ENCODE measurements at regions of chr19 and their contacts with region 1.

Region 1: GRCh38 chr19:41641879-41642485 is 15.1 kb upstream of the CEACAM4 start:
- DNase-seq: peak; percentile 67 to 80 (median 69)
- H3K4me3 ChIP-seq: no peak overlapping the region
- H3K27ac ChIP-seq: no peak overlapping the region
- H3K4me1 ChIP-seq: peaks cover 6 to 26% (median 18%) of the 10 kb centered on the region in 4 experiments
- H3K27me3 ChIP-seq: no peaks in the 10 kb centered on the region

Region 2: DNA sequence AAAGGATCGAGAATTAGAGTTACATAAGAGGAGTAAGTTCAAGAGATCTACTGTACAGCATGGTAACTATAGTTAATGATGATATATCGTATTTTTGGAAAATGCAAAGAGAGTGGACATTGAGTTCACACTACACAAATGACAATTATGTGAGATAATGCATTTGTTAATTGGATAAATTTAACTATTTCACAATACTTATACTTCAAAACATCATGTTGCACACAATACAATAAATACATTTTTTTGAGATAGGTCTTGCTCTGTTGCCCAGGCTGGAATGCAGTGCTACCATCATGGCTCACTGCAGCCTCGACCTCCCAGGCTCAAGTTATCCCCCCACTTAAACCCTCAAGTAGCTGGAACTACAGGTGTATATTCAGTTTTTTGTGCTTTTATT is 535.8 kb before region 1 on chr19:
- CTCF ChIA-PET with region 1: no interaction called
- POLR2A ChIA-PET with region 1: no interaction called
- DNase-seq: no peak
- H3K4me3 ChIP-seq: no peak overlapping the region
- H3K27ac ChIP-seq: no peak overlapping the region
- H3K4me1 ChIP-seq: no peaks in the 10 kb centered on the region
- H3K27me3 ChIP-seq: no peaks in the 10 kb centered on the region

Region 3: DNA sequence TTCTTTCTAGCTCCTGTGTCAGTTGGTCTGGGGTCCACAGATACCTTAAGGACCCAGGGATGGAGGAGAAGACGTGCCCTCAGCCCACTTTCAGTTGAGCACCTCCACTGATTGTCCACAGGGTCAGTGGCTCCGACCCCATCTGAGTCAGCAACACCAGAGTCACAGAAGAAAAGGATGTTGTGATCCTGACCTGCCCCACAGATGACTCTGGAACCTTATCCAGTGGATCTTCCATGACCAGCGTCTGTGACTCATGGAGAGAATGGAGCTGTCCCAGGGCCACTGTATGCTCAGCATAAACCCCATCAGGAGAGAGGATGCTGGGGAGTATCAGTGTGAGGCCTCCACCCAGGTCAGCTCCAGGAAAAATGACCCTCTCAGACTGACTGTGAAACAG is 37.2 kb before region 1 on chr19:
- CTCF ChIA-PET with region 1: no interaction called
- POLR2A ChIA-PET with region 1: no interaction called
- DNase-seq: no peak
- H3K4me3 ChIP-seq: no peak overlapping the region
- H3K27ac ChIP-seq: no peak overlapping the region
- H3K4me1 ChIP-seq: no peaks in the 10 kb centered on the region
- H3K27me3 ChIP-seq: peaks cover 0 to 4% (median 0%) of the 10 kb centered on the region in 5 experiments

Region 4: GRCh38 chr19:41652250-41652649 is 10.3 kb after region 1 on chr19:
- CTCF ChIA-PET with region 1: interaction called, 29 read pairs
- POLR2A ChIA-PET with region 1: no interaction called
- DNase-seq: no peak
- H3K4me3 ChIP-seq: no peak overlapping the region
- H3K27ac ChIP-seq: no peak overlapping the region
- H3K4me1 ChIP-seq: no peaks in the 10 kb centered on the region
- H3K27me3 ChIP-seq: peaks cover 0 to 19% (median 4%) of the 10 kb centered on the region in 5 experiments

Region 5: DNA sequence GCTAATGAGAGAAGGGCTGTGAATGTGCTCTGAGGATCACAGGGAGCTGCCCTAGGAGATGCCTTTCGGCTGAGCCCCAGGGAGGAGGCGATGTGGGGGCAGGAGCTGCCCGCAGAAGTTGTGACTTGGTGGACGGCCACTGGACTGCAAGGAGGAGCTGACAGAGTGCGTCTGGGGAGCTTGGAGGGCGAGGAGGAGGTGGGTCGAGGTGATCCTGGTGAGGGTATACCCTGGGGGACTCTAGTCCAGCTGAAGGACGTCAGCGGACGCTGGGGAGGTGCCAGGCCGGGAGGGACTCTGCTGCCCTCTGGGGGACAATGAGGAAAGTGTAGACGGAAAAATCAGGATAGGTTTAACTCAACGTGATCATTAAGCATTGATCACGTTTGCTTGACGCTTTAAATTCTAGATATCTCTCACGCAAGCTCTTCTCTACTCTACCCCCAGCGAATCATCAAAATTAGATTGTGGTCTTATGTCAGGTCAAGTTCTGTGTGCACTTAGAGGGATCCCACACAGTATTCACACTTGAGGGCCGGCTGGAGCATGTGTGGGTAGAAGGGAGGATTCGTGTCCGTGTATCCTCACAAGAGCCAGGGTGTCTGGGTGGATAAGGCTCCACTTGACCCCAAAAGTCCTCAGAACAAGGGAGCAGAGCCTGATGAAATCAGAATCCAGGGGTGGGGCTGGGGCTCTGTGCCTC is 49.4 kb after region 1 on chr19:
- CTCF ChIA-PET with region 1: interaction called, 14 read pairs
- POLR2A ChIA-PET with region 1: no interaction called
- DNase-seq: peak in 1 of 3 donors; percentile 14
- H3K4me3 ChIP-seq: no peak overlapping the region
- H3K27ac ChIP-seq: no peak overlapping the region
- H3K4me1 ChIP-seq: no peaks in the 10 kb centered on the region
- H3K27me3 ChIP-seq: peaks cover 0 to 12% (median 4%) of the 10 kb centered on the region in 5 experiments

Region 6: DNA sequence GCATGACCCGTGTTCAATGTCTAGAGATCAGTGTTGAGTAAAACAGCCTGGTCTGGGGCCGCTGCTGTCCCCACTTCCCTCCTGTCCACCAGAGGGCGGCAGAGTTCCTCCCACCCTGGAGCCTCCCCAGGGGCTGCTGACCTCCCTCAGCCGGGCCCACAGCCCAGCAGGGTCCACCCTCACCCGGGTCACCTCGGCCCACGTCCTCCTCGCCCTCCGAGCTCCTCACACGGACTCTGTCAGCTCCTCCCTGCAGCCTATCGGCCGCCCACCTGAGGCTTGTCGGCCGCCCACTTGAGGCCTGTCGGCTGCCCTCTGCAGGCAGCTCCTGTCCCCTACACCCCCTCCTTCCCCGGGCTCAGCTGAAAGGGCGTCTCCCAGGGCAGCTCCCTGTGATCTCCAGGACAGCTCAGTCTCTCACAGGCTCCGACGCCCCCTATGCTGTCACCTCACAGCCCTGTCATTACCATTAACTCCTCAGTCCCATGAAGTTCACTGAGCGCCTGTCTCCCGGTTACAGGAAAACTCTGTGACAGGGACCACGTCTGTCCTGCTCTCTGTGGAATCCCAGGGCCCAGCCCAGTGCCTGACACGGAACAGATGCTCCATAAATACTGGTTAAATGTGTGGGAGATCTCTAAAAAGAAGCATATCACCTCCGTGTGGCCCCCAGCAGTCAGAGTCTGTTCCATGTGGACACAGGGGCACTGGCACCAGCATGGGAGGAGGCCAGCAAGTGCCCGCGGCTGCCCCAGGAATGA is 64.9 kb after region 1 on chr19:
- CTCF ChIA-PET with region 1: interaction called, 12 read pairs
- POLR2A ChIA-PET with region 1: no interaction called
- DNase-seq: peak; percentile 82 to 86 (median 86)
- H3K4me3 ChIP-seq: peak overlapping the region in 6 of 7 experiments; percentile 4 to 67 (median 50)
- H3K27ac ChIP-seq: no peak overlapping the region
- H3K4me1 ChIP-seq: peaks cover 0 to 2% (median 0%) of the 10 kb centered on the region in 4 experiments
- H3K27me3 ChIP-seq: peaks cover 0 to 13% (median 7%) of the 10 kb centered on the region in 5 experiments

Measured in common myeloid progenitor, CD34-positive (primary cell).